ENCODE measurements at regions of chr18 and their contacts with region 1.

Region 1: GRCh38 chr18:58781627-58782194 is 83.0 kb upstream of the ZNF532 start:
- DNase-seq: peak; percentile 62 to 82 (median 79)
- H3K4me3 ChIP-seq: no peak overlapping the region
- H3K27ac ChIP-seq: no peak overlapping the region
- H3K4me1 ChIP-seq: no peaks in the 10 kb centered on the region
- H3K27me3 ChIP-seq: no peaks in the 10 kb centered on the region

Region 2: GRCh38 chr18:59056706-59057492 is 275.2 kb after region 1 on chr18:
- CTCF ChIA-PET with region 1: interaction called, 102 read pairs
- POLR2A ChIA-PET with region 1: no interaction called
- DNase-seq: peak; percentile 63 to 79 (median 76)
- H3K4me3 ChIP-seq: no peak overlapping the region
- H3K27ac ChIP-seq: no peak overlapping the region
- H3K4me1 ChIP-seq: peaks cover 0 to 4% (median 0%) of the 10 kb centered on the region in 4 experiments
- H3K27me3 ChIP-seq: peaks cover 0 to 6% (median 0%) of the 10 kb centered on the region in 5 experiments

Region 3: DNA sequence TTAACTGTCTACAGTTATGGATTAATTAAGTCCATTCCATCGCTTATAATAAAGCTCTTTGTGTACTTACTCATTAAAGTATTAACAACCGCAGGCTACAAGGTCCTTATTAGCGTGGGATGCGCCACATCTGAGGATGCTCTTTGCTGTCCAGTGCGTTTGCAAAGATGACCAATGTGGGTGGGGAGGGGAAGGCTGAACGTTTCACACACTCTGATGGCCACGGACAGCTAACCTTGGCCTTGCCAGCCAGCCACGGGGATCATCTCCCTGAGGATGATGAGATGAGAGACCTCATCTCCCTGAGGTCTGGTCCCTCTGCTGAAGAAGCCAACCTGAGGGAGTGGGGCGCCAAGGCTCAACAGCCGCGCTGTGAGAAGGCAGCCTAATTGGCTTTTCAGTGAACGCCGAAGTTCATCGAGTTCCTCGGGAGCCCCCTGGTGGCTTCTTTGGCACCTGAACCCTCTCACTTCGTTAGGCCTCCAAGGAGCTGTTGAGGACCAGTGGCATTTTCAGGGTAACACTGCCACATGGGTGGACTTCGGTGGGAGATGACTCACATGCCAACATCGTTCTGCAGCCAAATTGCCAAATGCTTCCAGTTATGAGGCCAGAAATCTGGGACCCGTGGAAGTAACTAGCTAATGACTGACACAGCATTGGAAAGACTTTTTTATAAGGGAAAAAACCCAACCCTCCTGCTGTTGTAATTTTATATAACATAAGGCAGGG is 288.6 kb after region 1 on chr18:
- CTCF ChIA-PET with region 1: interaction called, 102 read pairs
- POLR2A ChIA-PET with region 1: no interaction called
- DNase-seq: peak; percentile 85 to 92 (median 89)
- H3K4me3 ChIP-seq: no peak overlapping the region
- H3K27ac ChIP-seq: no peak overlapping the region
- H3K4me1 ChIP-seq: no peaks in the 10 kb centered on the region
- H3K27me3 ChIP-seq: peaks cover 0 to 3% (median 0%) of the 10 kb centered on the region in 5 experiments